K562 (cell line): ENCODE measurements at regions of chr1 and their contacts with region 1.

Region 1: DNA sequence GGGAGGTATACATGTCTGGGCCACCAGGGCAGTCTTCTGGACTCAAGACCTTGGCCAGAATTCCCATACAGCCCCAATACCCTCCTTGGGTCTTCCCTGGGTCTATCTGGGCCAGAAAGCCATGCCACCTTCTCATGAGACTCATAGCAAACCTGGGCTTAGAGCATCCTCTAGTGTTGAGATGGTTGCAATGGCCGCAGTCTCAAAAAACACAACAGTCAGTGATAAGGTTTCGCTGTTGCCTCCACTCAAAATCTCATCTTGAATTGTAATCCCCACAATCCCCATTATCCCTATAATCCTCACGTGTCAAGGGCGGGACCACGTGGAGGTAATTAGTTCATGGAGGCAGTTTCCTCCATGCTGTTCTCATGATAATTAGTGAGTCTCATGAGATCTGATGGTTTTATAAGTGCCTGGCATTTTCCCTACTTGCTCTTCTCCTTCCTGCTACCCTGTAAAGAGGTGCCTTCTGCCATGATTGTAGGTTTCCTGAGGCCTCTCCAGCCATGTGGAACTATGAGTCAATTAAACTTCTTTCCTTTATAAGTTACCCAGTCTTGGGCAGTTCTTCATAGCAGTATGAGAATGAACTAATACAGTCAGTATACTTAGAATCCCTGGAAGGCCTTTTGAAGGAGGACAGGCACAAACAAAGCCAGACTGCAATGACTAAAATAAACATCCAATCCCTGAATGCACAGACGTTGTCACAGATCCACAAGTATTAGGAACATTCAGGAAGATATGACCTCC is 77.0 kb downstream of the CTH start:
- DNase-seq: peak; percentile 17 to 72 (median 37)
- ATAC-seq: peak; percentile 92
- H3K4me3 ChIP-seq: no peak overlapping the region
- H3K27ac ChIP-seq: no peak overlapping the region
- H3K4me1 ChIP-seq: no peaks in the 10 kb centered on the region
- H3K27me3 ChIP-seq: no peaks in the 10 kb centered on the region
- CTCF ChIP-seq: peak; percentile 77 to 86 (median 84)
- EP300 ChIP-seq: no peak
- POLR2A ChIP-seq: no peak
- RAD21 ChIP-seq: peak; percentile 92 to 97

Region 2: DNA sequence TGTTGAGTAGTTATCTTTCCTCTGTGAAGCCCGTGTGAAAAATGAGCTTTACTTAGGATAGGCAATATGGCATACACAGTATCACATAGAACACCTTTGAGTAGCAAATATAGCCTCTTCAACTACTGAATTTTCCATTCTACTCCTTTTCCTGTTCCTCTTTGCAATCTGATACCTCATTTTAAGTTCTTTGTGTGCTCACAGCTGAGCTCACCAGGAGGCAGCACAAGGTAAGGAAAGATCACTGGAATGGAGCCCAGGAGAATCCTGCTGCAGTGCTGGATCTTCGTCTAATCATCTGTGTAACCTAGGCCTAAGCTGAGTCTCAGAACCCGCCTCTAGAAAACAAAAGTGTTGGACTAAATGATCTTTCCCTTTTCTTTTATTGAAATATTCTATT is 453.7 kb before region 1 on chr1:
- CTCF ChIA-PET with region 1: no interaction called
- POLR2A ChIA-PET with region 1: no interaction called
- in situ Hi-C with region 1: loop called (anchors 10 kb)
- intact Hi-C with region 1: loop called (anchors 2 kb)
- DNase-seq: peak; percentile 14 to 77 (median 32)
- ATAC-seq: peak; percentile 97
- H3K4me3 ChIP-seq: no peak overlapping the region
- H3K27ac ChIP-seq: no peak overlapping the region
- H3K4me1 ChIP-seq: peaks cover 0 to 3% of the 10 kb centered on the region in 2 experiments; a peak in 1 of 5 replicates
- H3K27me3 ChIP-seq: no peaks in the 10 kb centered on the region
- CTCF ChIP-seq: peak; percentile 67 to 86 (median 73)
- EP300 ChIP-seq: no peak
- POLR2A ChIP-seq: no peak
- RAD21 ChIP-seq: peak; percentile 98 to 99

Region 3: GRCh38 chr1:70134148-70134547 is 353.9 kb before region 1 on chr1:
- CTCF ChIA-PET with region 1: no interaction called
- POLR2A ChIA-PET with region 1: no interaction called
- in situ Hi-C with region 1: loop called (anchors 10 kb)
- intact Hi-C with region 1: loop called (anchors 1 kb)
- DNase-seq: no peak
- ATAC-seq: no peak
- H3K4me3 ChIP-seq: no peak overlapping the region
- H3K27ac ChIP-seq: no peak overlapping the region
- H3K4me1 ChIP-seq: no peaks in the 10 kb centered on the region
- H3K27me3 ChIP-seq: no peaks in the 10 kb centered on the region
- CTCF ChIP-seq: no peak
- EP300 ChIP-seq: no peak
- POLR2A ChIP-seq: no peak
- RAD21 ChIP-seq: no peak

Region 4: DNA sequence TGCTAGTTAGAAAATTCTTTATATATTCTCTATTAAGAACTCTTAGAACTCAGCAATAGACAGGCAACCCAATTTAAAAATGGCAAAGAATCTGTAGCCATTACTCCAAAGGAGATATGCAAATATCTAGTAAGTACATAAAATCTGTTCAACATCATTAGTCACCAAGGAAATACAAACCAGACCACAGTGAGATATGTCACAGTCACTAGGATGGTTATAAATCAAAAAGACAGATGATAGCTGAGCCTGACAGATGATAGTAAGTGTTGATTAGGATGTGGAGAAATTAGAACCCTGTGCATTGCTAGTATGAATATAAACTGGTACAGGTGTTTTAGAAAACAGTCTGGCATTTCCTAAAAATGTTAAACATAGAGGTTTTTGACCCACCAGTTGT is 240.3 kb before region 1 on chr1:
- CTCF ChIA-PET with region 1: no interaction called
- POLR2A ChIA-PET with region 1: no interaction called
- in situ Hi-C with region 1: no loop called
- intact Hi-C with region 1: loop called (anchors 5 kb)
- DNase-seq: no peak
- ATAC-seq: no peak
- H3K4me3 ChIP-seq: no peak overlapping the region
- H3K27ac ChIP-seq: no peak overlapping the region
- H3K4me1 ChIP-seq: no peaks in the 10 kb centered on the region
- H3K27me3 ChIP-seq: no peaks in the 10 kb centered on the region
- CTCF ChIP-seq: no peak
- EP300 ChIP-seq: peak; percentile 13; the same call in 1 of the 2 replicates
- POLR2A ChIP-seq: no peak
- RAD21 ChIP-seq: no peak

Region 5: GRCh38 chr1:70319750-70320149 is 168.3 kb before region 1 on chr1:
- CTCF ChIA-PET with region 1: no interaction called
- POLR2A ChIA-PET with region 1: no interaction called
- in situ Hi-C with region 1: no loop called
- intact Hi-C with region 1: loop called (anchors 10 kb)
- DNase-seq: no peak
- ATAC-seq: no peak
- H3K4me3 ChIP-seq: no peak overlapping the region
- H3K27ac ChIP-seq: no peak overlapping the region
- H3K4me1 ChIP-seq: no peaks in the 10 kb centered on the region
- H3K27me3 ChIP-seq: no peaks in the 10 kb centered on the region
- CTCF ChIP-seq: no peak
- EP300 ChIP-seq: no peak
- POLR2A ChIP-seq: no peak
- RAD21 ChIP-seq: no peak

Region 6: DNA sequence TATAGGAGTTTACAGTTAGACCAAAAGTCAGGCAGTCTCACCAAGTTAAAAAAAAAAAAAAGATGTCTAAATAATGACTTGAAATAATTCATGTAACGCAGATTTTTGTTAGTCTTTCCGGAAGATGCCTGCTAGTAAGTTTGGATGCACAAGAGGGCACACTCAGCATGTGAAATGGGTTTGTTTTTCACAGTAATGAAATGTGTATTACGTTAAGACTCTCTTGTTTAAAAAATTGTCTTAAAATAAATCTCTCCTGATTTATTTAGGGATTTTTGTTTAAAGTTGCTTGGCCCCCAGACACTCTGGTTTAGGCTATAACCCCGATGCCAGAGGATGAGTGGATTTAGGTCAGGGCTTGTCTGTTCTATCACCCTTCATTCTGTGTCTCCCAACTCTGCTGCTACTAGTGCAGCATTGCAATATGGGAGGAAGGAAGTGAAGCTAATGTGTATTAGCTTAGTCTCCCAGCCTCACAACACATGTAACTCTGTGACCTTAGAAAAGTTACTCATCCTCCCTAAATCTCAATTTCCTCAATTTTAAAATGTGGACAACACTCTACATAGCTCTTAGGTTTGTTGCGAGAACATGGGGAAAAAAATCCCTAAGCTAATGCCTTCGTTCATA is 51.4 kb before region 1 on chr1:
- CTCF ChIA-PET with region 1: no interaction called
- POLR2A ChIA-PET with region 1: no interaction called
- in situ Hi-C with region 1: no loop called
- intact Hi-C with region 1: loop called (anchors 1 kb)
- DNase-seq: peak in 1 of 4 experiments; percentile 14
- ATAC-seq: no peak
- H3K4me3 ChIP-seq: no peak overlapping the region
- H3K27ac ChIP-seq: no peak overlapping the region
- H3K4me1 ChIP-seq: no peaks in the 10 kb centered on the region
- H3K27me3 ChIP-seq: no peaks in the 10 kb centered on the region
- CTCF ChIP-seq: peak; percentile 11 to 53 (median 21); a peak in 3 of 6 replicates
- EP300 ChIP-seq: no peak
- POLR2A ChIP-seq: no peak
- RAD21 ChIP-seq: peak; percentile 27 to 58

Region 7: GRCh38 chr1:70509996-70510876 is 22.1 kb after region 1 on chr1:
- CTCF ChIA-PET with region 1: no interaction called
- POLR2A ChIA-PET with region 1: no interaction called
- in situ Hi-C with region 1: no loop called
- intact Hi-C with region 1: no loop called
- DNase-seq: peak; percentile 56 to 72 (median 62)
- ATAC-seq: peak; percentile 95
- H3K4me3 ChIP-seq: no peak overlapping the region
- H3K27ac ChIP-seq: no peak overlapping the region
- H3K4me1 ChIP-seq: no peaks in the 10 kb centered on the region; a peak in 1 of 5 replicates
- H3K27me3 ChIP-seq: no peaks in the 10 kb centered on the region
- CTCF ChIP-seq: peak; percentile 43 to 84 (median 54); a peak in 3 of 6 replicates
- EP300 ChIP-seq: no peak
- POLR2A ChIP-seq: no peak
- RAD21 ChIP-seq: peak; percentile 80 to 90